HepG2 (cell line): ENCODE measurements at regions of chr3 and their contacts with region 1.

Region 1: DNA sequence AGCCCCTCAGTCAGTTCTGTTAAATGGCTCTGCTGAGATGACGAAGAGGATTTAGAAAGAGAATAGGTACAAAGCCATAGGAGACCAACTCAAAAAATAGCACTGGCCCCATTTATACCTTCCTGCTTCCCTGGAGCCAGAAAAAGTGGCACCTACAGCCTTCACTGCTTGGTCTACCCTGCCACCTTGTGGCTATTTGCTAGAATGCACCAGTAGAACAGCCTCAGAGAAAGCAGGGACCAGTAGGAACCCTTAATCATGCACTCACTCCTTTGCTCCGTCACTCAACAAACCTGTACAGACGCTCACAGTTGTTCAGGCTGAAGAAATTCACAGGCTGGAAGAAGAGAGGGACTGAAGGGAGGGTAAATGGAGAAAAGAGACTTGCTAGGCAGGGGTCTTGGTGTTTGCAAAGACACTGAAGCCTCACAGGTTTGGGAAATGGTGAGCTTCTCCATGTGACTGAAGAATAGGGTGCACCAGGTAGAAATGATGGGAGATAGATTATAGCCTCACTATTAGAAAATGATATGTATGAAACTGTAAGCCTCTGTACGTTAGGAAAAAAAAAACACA is 12.1 kb upstream of the RTP2 start:
- DNase-seq: peak; percentile 74
- ATAC-seq: peak; percentile 84
- H3K4me3 ChIP-seq: peak overlapping the region in 2 of 3 experiments; percentile 35 to 51; a peak in 4 of 6 replicates
- H3K27ac ChIP-seq: no peak overlapping the region
- H3K4me1 ChIP-seq: peaks cover 30% of the 10 kb centered on the region
- H3K27me3 ChIP-seq: no peaks in the 10 kb centered on the region
- CTCF ChIP-seq: peak; percentile 95
- EP300 ChIP-seq: no peak
- POLR2A ChIP-seq: no peak
- RAD21 ChIP-seq: peak; percentile 87

Region 2: DNA sequence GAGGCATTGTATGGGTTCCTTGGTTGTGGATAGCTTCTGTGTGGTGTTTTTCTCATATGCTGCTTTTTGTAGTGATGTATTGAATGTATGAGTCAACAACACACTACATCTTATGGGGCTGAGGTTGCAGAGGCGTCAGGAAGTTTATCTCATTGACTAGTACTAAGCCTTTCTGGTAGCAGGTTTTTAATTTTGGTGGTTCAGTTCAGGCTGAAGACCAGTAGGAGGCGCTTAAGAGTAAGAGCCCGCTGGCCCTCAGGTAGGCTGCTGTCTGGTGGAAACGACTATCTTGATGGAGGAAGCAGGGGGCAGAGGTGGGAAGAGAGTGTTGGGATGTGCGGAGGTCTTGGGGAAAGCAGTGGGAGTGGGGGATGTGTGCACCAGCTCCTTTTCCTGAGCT is 283.9 kb before region 1 on chr3:
- CTCF ChIA-PET with region 1: no interaction called
- POLR2A ChIA-PET with region 1: no interaction called
- in situ Hi-C with region 1: no loop called
- intact Hi-C with region 1: no loop called
- DNase-seq: no peak
- ATAC-seq: no peak
- H3K4me3 ChIP-seq: no peak overlapping the region
- H3K27ac ChIP-seq: no peak overlapping the region
- H3K4me1 ChIP-seq: no peaks in the 10 kb centered on the region
- H3K27me3 ChIP-seq: no peaks in the 10 kb centered on the region
- CTCF ChIP-seq: peak; percentile 31
- EP300 ChIP-seq: no peak
- POLR2A ChIP-seq: no peak
- RAD21 ChIP-seq: no peak

Region 3: DNA sequence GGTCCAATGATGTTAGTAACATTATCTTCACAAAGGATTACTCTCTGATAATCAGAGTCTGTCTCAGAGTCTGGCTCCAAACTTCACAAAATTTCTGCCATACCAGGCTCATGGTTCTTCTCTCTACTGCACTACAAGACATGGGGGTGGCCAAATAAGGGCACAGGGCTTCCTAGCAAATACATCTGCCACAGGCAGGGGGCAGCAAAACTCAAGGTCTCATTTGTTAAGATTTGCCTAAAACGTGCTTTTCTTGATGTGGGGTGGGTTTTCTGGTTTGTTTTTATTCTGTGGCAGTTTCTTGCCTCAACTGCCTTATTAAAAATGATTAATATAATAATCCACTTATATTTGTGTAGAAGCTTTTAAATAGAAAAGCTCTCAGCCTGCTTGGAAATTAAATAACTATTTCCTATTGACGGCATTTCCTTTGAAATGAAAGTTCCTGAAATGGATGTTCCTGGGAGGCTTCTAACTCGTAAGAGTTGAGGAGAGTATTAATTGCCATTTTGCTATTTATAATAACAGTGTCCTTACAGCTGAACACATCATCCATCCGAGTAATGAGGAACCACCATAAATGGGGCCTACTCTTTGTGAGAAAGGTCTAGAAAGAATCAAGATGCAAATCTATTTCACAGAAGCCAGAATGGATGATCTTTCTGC is 98.1 kb before region 1 on chr3:
- CTCF ChIA-PET with region 1: interaction called, 19 read pairs
- POLR2A ChIA-PET with region 1: no interaction called
- in situ Hi-C with region 1: no loop called
- intact Hi-C with region 1: loop called (anchors 1 kb)
- DNase-seq: peak; percentile 35
- ATAC-seq: peak; percentile 79
- H3K4me3 ChIP-seq: no peak overlapping the region
- H3K27ac ChIP-seq: no peak overlapping the region
- H3K4me1 ChIP-seq: no peaks in the 10 kb centered on the region
- H3K27me3 ChIP-seq: no peaks in the 10 kb centered on the region
- CTCF ChIP-seq: peak; percentile 74
- EP300 ChIP-seq: no peak
- POLR2A ChIP-seq: no peak
- RAD21 ChIP-seq: peak; percentile 38; the same call in 1 of the 2 replicates